ENCODE measurements at regions of chr20 and their contacts with region 1.

Region 1: GRCh38 chr20:3312940-3313682 is 74.1 kb upstream of the SLC4A11 start:
- DNase-seq: peak in 2 of 3 donors; percentile 54 to 56
- H3K4me3 ChIP-seq: no peak overlapping the region
- H3K27ac ChIP-seq: peak overlapping the region in 1 of 2 experiments; percentile 37
- H3K4me1 ChIP-seq: peaks cover 11 to 21% (median 16%) of the 10 kb centered on the region in 4 experiments
- H3K27me3 ChIP-seq: no peaks in the 10 kb centered on the region

Region 2: GRCh38 chr20:3051385-3052019 is 261.6 kb before region 1 on chr20:
- CTCF ChIA-PET with region 1: interaction called, 11 read pairs
- POLR2A ChIA-PET with region 1: no interaction called
- DNase-seq: peak in 2 of 3 donors; percentile 56 to 65
- H3K4me3 ChIP-seq: no peak overlapping the region
- H3K27ac ChIP-seq: no peak overlapping the region
- H3K4me1 ChIP-seq: peaks cover 0 to 15% (median 10%) of the 10 kb centered on the region in 4 experiments
- H3K27me3 ChIP-seq: no peaks in the 10 kb centered on the region

Region 3: DNA sequence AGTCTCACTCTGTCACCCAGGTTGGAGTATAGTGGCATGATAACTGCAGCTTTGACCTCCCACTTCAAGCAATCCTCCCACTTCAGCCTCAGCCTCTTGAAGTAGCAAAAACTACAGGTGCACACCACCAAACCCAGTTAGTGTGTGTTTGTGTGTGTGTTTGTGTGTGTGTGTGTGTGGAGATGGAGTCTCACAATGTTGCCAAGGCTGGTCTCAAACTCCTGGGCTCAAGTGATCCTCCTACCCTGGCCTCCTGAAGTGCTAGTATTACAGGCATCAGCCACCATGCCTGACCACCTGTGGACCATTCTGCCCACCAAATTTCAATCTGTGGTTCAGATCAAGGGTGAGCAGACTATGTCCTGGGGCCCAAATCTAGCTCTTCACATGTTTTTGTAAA is 162.2 kb before region 1 on chr20:
- CTCF ChIA-PET with region 1: no interaction called
- POLR2A ChIA-PET with region 1: no interaction called
- DNase-seq: no peak
- H3K4me3 ChIP-seq: no peak overlapping the region
- H3K27ac ChIP-seq: peak overlapping the region in 1 of 2 experiments; percentile 30
- H3K4me1 ChIP-seq: peaks cover 0 to 2% (median 0%) of the 10 kb centered on the region in 4 experiments
- H3K27me3 ChIP-seq: no peaks in the 10 kb centered on the region

Region 4: GRCh38 chr20:3218307-3218988 is 94.7 kb before region 1 on chr20:
- CTCF ChIA-PET with region 1: interaction called, 25 read pairs
- POLR2A ChIA-PET with region 1: no interaction called
- DNase-seq: peak; percentile 47 to 73 (median 71)
- H3K4me3 ChIP-seq: no peak overlapping the region
- H3K27ac ChIP-seq: no peak overlapping the region
- H3K4me1 ChIP-seq: peaks cover 0 to 25% (median 20%) of the 10 kb centered on the region in 4 experiments
- H3K27me3 ChIP-seq: no peaks in the 10 kb centered on the region

Region 5: DNA sequence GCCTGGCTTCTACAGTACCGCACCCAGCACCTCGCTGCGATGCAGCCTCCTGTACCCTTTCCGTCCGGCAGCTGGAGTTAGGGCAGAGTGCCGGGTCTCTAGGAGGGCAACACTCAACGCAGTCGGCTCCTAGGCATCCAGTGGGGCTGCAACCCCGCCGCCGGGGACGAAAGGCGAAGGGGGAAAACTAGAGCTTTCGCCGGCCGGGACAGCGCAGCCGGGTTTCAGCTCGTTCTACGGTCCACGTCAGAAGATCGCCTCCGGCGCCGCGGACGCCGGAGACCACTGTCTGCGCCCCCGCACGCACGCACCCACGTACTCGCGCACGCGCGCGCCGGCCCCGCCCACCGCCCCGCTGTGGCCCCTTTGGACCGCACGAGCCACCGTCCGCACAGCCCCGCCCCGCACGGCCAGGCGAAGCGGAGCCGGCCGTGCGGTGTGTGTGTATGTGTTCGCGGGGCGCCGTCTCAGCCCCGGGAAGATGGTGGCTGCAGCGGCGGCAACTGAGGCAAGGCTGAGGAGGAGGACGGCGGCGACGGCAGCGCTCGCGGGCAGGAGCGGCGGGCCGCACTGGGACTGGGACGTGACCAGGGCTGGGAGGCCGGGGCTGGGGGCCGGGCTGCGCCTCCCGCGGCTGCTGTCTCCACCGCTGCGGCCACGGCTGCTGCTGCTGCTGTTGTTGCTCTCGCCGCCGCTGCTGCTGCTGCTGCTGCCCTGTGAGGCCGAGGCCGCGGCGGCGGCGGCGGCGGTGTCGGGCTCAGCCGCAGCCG is 157.7 kb after region 1 on chr20 and contains the start of gene ATRN:
- CTCF ChIA-PET with region 1: no interaction called
- POLR2A ChIA-PET with region 1: no interaction called
- DNase-seq: peak; percentile 87 to 94 (median 92)
- H3K4me3 ChIP-seq: peak within 1 kb of the TSS; percentile 73 to 94 (median 87)
- H3K27ac ChIP-seq: peak within 1 kb of the TSS; percentile 31 to 68
- H3K4me1 ChIP-seq: peaks cover 6 to 23% (median 16%) of the 10 kb centered on the region in 4 experiments
- H3K27me3 ChIP-seq: no peaks in the 10 kb centered on the region